ENCODE measurements at regions of chr7 and their contacts with region 1.

Region 1: GRCh38 chr7:74068393-74069085 is 15.1 kb upstream of the LIMK1 start:
- DNase-seq: no peak
- H3K4me3 ChIP-seq: no peak overlapping the region
- H3K27ac ChIP-seq: no peak overlapping the region
- H3K4me1 ChIP-seq: no peaks in the 10 kb centered on the region
- H3K27me3 ChIP-seq: no peaks in the 10 kb centered on the region
- CTCF ChIP-seq: no peak
- EP300 ChIP-seq: no peak
- RAD21 ChIP-seq: no peak

Region 2: DNA sequence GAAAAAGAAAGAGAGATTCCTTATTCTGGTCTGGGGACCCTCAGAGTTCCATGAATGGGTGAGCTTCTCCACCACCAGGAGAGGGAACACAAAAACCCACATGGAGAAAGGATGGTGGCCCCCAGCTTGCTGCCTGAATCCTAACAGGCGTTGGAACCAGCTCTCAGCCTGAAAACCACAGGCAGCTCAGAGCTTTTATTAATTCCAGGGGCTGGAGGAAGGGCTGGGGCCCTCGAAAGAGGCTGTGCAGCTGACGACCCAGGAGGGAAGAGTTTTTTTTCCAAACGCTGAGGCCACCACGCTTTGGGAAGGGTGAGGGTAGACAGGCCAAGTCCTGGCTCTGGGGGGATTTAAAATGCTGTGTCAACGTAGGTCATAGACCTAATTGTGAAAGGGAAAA is 51.4 kb before region 1 on chr7:
- CTCF ChIA-PET with region 1: no interaction called
- POLR2A ChIA-PET with region 1: no interaction called
- DNase-seq: no peak
- H3K4me3 ChIP-seq: no peak overlapping the region
- H3K27ac ChIP-seq: no peak overlapping the region
- H3K4me1 ChIP-seq: peaks cover 5 to 25% of the 10 kb centered on the region in 2 experiments; a peak in 2 of 4 replicates
- H3K27me3 ChIP-seq: no peaks in the 10 kb centered on the region
- CTCF ChIP-seq: no peak
- EP300 ChIP-seq: no peak
- RAD21 ChIP-seq: no peak

Region 3: DNA sequence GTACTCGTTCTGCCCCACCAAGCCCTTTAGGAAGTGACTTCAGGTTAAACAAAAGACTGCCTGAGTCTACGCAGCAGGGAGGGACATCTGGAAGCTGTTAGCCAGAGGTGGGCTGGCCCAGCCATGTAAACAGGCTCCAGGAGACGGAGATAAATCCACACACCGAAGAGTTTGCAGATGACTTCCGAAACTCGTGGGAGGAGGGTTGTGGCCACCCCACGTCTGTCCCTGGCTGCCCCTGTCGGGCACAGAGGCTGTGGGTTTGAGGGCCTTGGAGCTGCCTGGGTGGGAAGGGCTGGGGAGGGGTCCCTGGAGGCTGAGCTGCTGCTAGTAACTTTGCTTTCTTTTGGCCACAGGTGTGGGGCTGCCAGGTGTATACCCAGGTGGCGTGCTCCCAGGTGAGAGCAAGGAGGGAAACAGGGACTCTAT is 25.0 kb before region 1 on chr7:
- CTCF ChIA-PET with region 1: interaction called, 13 read pairs
- POLR2A ChIA-PET with region 1: no interaction called
- DNase-seq: peak; percentile 91
- H3K4me3 ChIP-seq: peak overlapping the region in 1 of 2 experiments; percentile 37; a peak in 2 of 4 replicates
- H3K27ac ChIP-seq: peak overlapping the region; percentile 31 to 99; a peak in 3 of 4 replicates
- H3K4me1 ChIP-seq: peaks cover 20 to 65% of the 10 kb centered on the region in 2 experiments
- H3K27me3 ChIP-seq: no peaks in the 10 kb centered on the region
- CTCF ChIP-seq: no peak
- EP300 ChIP-seq: peak in 1 of 2 experiments; percentile 70; a peak in 1 of 4 replicates
- RAD21 ChIP-seq: no peak; the same call in 1 of the 2 replicates

Region 4: DNA sequence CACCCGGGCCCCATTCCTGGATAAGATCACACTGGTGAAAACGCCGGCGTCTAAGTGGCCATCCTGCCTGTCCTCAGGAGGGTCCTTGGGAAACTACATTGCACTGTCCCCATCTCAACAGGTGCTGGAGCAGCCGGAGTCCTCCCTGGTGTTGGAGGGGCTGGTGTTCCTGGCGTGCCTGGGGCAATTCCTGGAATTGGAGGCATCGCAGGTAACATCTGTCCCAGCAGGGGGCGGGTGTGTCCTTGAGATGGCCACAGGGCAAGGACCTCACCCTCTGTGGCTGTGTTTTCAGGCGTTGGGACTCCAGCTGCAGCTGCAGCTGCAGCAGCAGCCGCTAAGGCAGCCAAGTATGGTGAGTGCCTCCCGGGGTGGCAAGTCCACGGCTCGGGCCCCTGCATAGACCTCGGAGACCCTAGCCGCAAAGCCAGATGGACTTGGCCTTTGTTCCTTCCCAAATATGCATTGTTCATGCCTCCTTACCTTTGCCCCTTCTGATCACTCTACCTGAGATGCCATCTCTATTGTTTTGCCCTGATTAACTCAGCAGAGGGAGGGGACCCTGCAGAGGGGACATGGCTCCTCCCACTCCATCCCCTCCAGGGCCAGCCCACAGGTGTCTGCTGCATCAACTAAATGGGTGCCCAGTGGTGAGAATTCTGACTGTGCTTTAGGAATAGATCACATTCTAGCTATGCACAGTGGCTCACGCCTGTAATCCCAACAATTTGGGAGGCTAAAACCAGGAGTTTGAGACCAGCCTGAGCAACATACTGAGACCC is 16.7 kb before region 1 on chr7:
- CTCF ChIA-PET with region 1: interaction called, 12 read pairs
- POLR2A ChIA-PET with region 1: no interaction called
- DNase-seq: peak; percentile 74
- H3K4me3 ChIP-seq: no peak overlapping the region
- H3K27ac ChIP-seq: no peak overlapping the region
- H3K4me1 ChIP-seq: no peaks in the 10 kb centered on the region
- H3K27me3 ChIP-seq: no peaks in the 10 kb centered on the region
- CTCF ChIP-seq: peak; percentile 57
- EP300 ChIP-seq: no peak
- RAD21 ChIP-seq: peak; percentile 61

Region 5: DNA sequence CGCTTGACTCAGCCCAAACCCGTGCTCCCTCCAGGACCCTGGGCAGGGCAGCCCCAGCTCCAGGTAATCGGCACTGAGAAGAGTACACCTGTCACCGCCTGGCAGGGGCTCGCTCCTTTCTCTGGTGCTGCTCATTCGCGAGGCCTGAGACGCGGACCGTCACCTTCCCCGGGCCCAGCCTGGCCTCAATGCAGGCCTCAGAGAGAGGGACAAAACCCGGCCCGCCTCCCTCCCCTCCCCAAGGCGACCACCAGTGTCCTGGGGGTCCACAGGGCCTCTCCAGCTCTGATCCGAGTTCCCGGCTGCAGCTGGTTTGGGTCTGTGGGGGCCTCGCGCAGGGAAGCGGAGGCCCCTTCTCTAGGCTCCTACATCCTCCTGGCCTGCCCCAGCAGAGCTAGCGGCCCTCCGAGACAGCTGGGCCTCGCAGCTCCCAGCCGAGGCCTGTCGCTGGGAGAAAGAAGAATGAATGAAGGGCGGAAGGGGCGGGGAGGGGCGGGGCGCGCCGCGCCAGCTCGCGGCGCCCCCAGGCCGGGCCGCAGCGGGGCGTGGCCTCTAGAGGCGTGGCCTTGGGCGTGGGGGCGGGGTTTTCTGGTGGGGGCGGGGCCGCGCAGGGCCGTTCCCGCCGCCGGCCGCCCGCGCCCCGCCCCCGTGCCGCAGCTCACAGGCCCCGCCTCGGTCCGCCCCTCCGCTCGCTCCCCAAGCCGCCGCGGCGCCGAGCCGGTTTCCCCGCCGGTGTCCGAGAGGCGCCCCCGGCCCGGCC is 14.8 kb after region 1 on chr7 and contains the start of gene LIMK1:
- CTCF ChIA-PET with region 1: interaction called, 18 read pairs
- POLR2A ChIA-PET with region 1: no interaction called
- DNase-seq: peak; percentile 100
- H3K4me3 ChIP-seq: peak within 1 kb of the TSS; percentile 57 to 98
- H3K27ac ChIP-seq: peak within 1 kb of the TSS; percentile 62 to 86
- H3K4me1 ChIP-seq: peaks cover 23 to 27% of the 10 kb centered on the region in 2 experiments; a peak in 3 of 4 replicates
- H3K27me3 ChIP-seq: no peaks in the 10 kb centered on the region
- CTCF ChIP-seq: no peak
- EP300 ChIP-seq: no peak
- RAD21 ChIP-seq: no peak
- polyA plus RNA-seq, gene LIMK1: 64.4 and 86.6 TPM in 2 replicates

Region 6: GRCh38 chr7:74183613-74184450 is 115.3 kb after region 1 on chr7:
- CTCF ChIA-PET with region 1: interaction called, 25 read pairs
- POLR2A ChIA-PET with region 1: no interaction called
- DNase-seq: peak; percentile 49
- H3K4me3 ChIP-seq: no peak overlapping the region
- H3K27ac ChIP-seq: no peak overlapping the region; a peak in 1 of 4 replicates
- H3K4me1 ChIP-seq: peaks cover 17 to 28% of the 10 kb centered on the region in 2 experiments; a peak in 3 of 4 replicates
- H3K27me3 ChIP-seq: no peaks in the 10 kb centered on the region
- CTCF ChIP-seq: peak; percentile 58
- EP300 ChIP-seq: no peak
- RAD21 ChIP-seq: peak; percentile 52

Measured in SK-N-SH (cell line).